ENCODE measurements at regions of chr6 and their contacts with region 1.

Region 1: DNA sequence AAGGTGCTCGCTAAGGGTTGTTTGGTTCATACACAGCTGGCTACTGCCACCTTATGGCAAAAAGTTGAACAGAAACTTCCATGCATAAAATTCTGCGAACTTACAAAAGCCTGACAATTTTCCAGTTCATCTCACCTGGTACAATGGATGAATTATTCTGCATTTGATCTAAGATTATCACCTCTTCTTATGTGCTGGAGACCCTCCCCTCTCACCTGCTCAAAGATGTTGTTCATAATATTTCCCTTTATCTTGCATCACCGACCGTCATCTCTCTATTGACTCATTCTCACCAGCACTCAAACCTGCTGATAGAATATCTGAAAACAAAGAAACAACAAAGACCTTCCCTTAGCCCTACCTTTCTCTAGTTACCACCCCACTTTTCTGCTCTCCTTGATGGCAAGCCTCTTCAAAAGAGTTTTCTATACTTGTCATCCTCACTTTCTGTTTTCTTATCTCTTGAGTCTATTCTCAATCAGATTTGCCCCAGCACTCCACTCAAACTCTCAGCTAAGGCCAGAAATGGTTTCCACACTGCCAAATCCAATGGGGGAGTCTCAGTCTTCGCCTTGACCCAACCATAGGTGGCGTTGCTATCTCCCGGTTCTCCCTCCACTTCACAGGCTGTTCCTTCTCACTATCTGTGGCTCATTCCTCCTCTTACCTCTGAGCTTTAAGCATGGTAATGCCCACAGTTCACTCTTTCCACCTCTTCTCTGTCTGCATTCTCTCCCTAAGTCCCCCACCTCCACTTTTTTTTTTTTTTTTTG is 25.8 kb downstream of the SNRNP48 start:
- DNase-seq: peak in 1 of 3 donors; percentile 82
- ATAC-seq: peak; percentile 68
- H3K4me3 ChIP-seq: no peak overlapping the region
- H3K4me1 ChIP-seq: peaks cover 9% of the 10 kb centered on the region
- CTCF ChIP-seq: peak; percentile 50

Region 2: GRCh38 chr6:7270320-7271204 is 345.2 kb before region 1 on chr6:
- intact Hi-C with region 1: loop called in 1 of 2 experiments (anchors 10 kb)
- DNase-seq: no peak
- ATAC-seq: peak; percentile 53
- H3K4me3 ChIP-seq: no peak overlapping the region
- H3K4me1 ChIP-seq: no peaks in the 10 kb centered on the region
- CTCF ChIP-seq: no peak

Region 3: DNA sequence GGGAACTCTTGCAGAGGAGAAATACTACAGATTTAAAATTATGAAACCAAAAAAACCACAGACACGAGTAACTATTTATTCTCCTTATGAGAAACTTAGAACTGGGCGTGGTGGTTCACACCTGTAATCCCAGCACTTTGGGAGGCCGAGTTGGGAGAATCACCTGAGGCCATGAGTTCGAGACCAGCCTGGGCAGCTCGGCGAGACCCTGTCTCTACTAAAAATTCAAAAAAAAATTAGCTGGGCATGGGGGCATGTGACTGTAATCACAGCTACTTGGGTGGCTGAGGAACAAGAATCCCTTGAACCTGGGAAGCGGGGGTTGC is 339.6 kb before region 1 on chr6:
- intact Hi-C with region 1: loop called (anchors 2 to 10 kb)
- DNase-seq: no peak
- ATAC-seq: no peak
- H3K4me3 ChIP-seq: no peak overlapping the region
- H3K4me1 ChIP-seq: no peaks in the 10 kb centered on the region
- CTCF ChIP-seq: no peak

Region 4: DNA sequence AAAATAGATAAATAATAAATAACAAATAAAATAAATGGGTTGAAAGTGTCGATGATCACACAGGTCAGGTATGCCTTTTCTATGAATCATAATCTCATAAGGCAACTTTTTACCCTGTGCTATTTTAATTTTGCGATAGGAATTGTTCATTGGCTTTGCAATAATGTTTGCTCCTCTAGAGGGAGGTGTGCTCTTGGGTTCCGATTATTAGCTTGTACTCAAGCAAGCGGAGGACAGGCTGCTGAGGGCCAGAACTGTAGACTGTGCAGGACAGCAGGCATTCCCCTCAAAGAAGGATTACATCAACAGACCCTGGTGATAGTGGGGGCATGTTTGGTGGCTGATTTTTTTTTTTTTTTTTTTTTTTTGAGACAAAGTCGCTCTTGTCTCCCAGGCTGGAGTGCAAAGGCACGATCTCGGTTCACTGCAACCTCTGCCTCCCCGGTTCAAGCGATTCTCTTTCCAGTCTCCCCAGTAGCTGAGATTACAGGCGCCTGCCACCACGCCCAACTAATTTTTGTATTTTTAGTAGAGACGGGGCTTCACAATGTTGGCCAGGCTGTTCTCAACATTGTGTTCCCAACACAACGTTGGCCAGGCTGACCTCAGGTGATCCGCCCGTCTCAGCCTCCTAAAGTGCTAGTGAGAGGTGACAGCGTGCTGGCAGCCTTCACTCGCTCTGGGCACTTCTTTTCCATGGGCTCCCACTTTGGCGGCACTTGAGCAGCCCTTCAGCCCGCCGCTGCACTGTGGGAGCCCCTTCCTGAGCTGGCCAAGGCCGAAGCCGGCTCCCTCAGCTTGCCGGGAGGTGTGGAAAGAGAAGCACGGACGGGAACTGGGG is 190.6 kb before region 1 on chr6:
- intact Hi-C with region 1: loop called in 1 of 2 experiments (anchors 10 kb)
- DNase-seq: peak in 1 of 3 donors; percentile 60
- ATAC-seq: peak; percentile 94
- H3K4me3 ChIP-seq: no peak overlapping the region
- H3K4me1 ChIP-seq: no peaks in the 10 kb centered on the region
- CTCF ChIP-seq: no peak

Region 5: GRCh38 chr6:7479801-7480266 is 136.0 kb before region 1 on chr6:
- intact Hi-C with region 1: no loop called
- DNase-seq: peak; percentile 62 to 74 (median 63)
- ATAC-seq: peak; percentile 97
- H3K4me3 ChIP-seq: no peak overlapping the region
- H3K4me1 ChIP-seq: no peaks in the 10 kb centered on the region
- CTCF ChIP-seq: no peak

Region 6: DNA sequence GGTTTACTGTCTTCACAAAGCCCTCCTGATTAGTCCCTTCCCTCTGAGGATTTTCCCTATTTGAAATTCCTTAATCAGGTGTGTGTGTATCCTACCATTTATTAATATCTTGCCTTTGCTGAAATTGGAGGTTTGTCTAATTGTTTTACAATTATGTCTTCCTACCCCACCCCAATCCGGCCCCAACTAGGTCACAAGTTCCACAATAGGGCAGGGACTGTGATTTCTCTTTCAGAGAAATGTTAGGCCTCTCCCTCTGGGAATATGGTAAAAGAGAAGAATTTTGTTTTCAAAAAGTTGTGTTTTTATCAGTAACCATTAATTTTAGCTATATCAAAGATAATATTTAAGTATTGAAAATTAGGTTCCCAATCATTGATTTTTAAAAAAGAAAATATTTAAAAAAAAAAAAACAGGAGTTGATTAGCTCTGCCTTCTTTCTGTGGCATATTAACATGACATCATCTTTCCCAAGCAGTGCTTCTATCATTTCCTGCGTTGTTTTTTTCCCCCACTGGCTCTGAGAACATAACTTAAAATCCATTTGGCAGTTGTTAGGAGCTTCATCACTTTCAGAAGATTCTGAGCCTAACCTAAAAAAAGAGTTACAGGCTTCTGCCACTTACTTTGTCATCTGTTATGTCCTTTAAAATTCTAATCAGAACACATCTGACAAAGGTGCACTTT is 412.3 kb after region 1 on chr6:
- intact Hi-C with region 1: no loop called
- DNase-seq: no peak
- ATAC-seq: no peak
- H3K4me3 ChIP-seq: no peak overlapping the region
- H3K4me1 ChIP-seq: no peaks in the 10 kb centered on the region
- CTCF ChIP-seq: no peak

Measured in mucosa of descending colon (tissue), 3 donors.